IMR-90 (cell line): ENCODE measurements at regions of chr6 and their contacts with region 1.

Region 1: GRCh38 chr6:2576499-2576898 is 174.2 kb downstream of the MYLK4 start:
- DNase-seq: no peak
- ATAC-seq: no peak
- H3K4me3 ChIP-seq: no peak overlapping the region
- H3K27ac ChIP-seq: no peak overlapping the region
- H3K4me1 ChIP-seq: peaks cover 10% of the 10 kb centered on the region
- H3K27me3 ChIP-seq: no peaks in the 10 kb centered on the region
- CTCF ChIP-seq: no peak
- POLR2A ChIP-seq: no peak
- RAD21 ChIP-seq: no peak

Region 2: GRCh38 chr6:2514965-2515555 is 61.4 kb before region 1 on chr6:
- CTCF ChIA-PET with region 1: no interaction called
- POLR2A ChIA-PET with region 1: interaction called, 17 read pairs
- dilution Hi-C with region 1: no loop called
- in situ Hi-C with region 1: no loop called
- intact Hi-C with region 1: no loop called
- DNase-seq: no peak
- ATAC-seq: no peak
- H3K4me3 ChIP-seq: no peak overlapping the region
- H3K27ac ChIP-seq: no peak overlapping the region
- H3K4me1 ChIP-seq: peaks cover 4% of the 10 kb centered on the region; the same call in 1 of the 2 replicates
- H3K27me3 ChIP-seq: peaks cover 14% of the 10 kb centered on the region
- CTCF ChIP-seq: no peak
- POLR2A ChIP-seq: no peak
- RAD21 ChIP-seq: no peak